ENCODE measurements at regions of chr1 and their contacts with region 1.

Region 1: DNA sequence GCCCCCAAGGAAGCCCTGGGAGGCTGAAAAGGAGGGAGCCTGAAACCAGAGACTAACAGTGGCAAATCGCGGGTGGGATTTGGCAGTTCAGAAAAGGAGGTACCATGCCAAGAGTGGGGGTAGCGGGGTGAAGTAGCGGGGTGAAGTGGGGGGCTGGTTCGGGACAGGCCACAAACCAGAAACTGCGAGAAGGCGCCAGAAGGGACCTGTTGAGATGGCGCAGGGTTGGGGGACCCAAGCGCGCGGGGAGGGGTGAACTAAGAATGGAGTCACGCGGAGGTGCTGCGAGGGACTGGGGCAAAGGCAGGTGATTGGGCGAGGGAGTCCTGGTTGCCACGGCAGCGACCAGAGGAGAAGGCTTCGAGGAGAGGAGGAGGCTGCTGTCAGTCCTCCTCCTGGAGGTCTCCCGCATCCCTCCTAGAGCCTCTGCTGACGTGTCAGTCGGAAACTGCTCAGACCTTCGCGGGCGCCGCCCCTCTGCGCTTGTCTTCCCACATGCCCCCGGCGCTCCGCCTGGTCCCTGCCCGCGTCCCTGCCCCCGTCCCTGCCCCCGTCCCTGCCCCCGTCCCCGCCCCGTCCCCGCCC is 438 bp upstream of the MIA3 start:
- DNase-seq: peak; percentile 89 to 99 (median 92)
- H3K4me3 ChIP-seq: peak overlapping the region; percentile 25 to 74
- H3K4me3 Mint-ChIP-seq: peak overlapping the region; percentile 89 to 97 (median 94)
- H3K27ac ChIP-seq: peak overlapping the region; percentile 68
- H3K27ac Mint-ChIP-seq: peak overlapping the region; percentile 90 to 98 (median 97)
- H3K4me1 ChIP-seq: peaks cover 22% of the 10 kb centered on the region
- H3K4me1 Mint-ChIP-seq: peaks cover 19 to 37% (median 28%) of the 10 kb centered on the region in 4 donors
- H3K27me3 ChIP-seq: no peaks in the 10 kb centered on the region
- H3K27me3 Mint-ChIP-seq: peaks cover 15 to 24% of the 10 kb centered on the region in 2 donors

Region 2: DNA sequence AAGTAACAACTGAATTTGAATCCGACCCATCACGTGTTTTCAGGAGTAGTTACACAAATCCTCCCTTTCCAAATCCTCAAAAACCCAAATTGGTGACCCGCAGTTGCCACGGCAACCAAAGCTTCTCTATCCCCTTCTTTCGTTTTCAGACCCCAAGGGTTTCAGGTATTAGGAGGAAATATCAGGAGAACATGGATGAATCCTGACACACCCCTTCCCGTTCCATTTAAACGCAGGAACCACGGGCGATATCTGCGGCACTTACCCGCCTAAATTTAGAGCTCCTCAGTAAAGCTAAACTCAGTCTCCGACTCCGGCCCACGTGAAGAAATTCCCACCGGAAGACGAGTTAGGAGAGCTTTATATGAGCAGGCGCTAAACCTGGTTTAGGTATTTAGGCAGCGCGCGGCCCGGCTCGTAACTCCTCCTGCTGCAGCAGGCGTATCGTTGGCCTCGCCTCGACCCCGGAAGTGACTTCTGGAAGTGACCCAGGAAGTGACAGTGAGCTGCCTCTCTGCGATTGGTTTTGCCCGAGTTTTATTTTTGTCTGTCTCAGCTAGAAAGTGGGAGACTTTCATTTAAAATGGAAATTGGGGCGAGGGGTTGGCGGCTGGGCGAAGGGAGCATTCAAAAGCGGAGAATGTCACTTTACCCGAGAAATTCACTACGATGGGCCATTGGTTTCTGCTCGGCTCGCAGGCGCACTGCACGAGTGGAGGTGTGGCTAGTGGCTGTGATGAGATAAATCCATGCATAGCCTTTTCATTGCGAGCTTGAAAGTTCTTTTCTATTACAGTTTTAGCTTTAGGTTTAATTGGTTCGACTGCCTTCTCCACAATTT is 27.8 kb before region 1 on chr1 and contains the start of gene TAF1A:
- CTCF ChIA-PET with region 1: interaction called, 4 read pairs
- POLR2A ChIA-PET with region 1: interaction called, 23 read pairs
- intact Hi-C with region 1: loop called (anchors 1 kb)
- DNase-seq: peak; percentile 85 to 94 (median 88)
- H3K4me3 ChIP-seq: peak within 1 kb of the TSS; percentile 78 to 85
- H3K4me3 Mint-ChIP-seq: peak within 1 kb of the TSS; percentile 95 to 99 (median 98)
- H3K27ac ChIP-seq: peak within 1 kb of the TSS; percentile 76
- H3K27ac Mint-ChIP-seq: peak within 1 kb of the TSS; percentile 92 to 100 (median 99)
- H3K4me1 ChIP-seq: peaks cover 27% of the 10 kb centered on the region
- H3K4me1 Mint-ChIP-seq: peaks cover 32 to 52% (median 43%) of the 10 kb centered on the region in 4 donors
- H3K27me3 ChIP-seq: no peaks in the 10 kb centered on the region
- H3K27me3 Mint-ChIP-seq: no peaks in the 10 kb centered on the region
- total RNA-seq, gene TAF1A: 16.4 to 17.8 TPM

Region 3: GRCh38 chr1:222909586-222909985 is 292.1 kb after region 1 on chr1:
- CTCF ChIA-PET with region 1: no interaction called
- POLR2A ChIA-PET with region 1: no interaction called
- intact Hi-C with region 1: no loop called
- DNase-seq: no peak
- H3K4me3 ChIP-seq: no peak overlapping the region
- H3K4me3 Mint-ChIP-seq: no peak overlapping the region
- H3K27ac ChIP-seq: no peak overlapping the region
- H3K27ac Mint-ChIP-seq: no peak overlapping the region
- H3K4me1 ChIP-seq: no peaks in the 10 kb centered on the region
- H3K4me1 Mint-ChIP-seq: peaks cover 0 to 1% (median 0%) of the 10 kb centered on the region in 4 donors
- H3K27me3 ChIP-seq: no peaks in the 10 kb centered on the region
- H3K27me3 Mint-ChIP-seq: no peaks in the 10 kb centered on the region